ENCODE measurements at regions of chr22 and their contacts with region 1.

Region 1: DNA sequence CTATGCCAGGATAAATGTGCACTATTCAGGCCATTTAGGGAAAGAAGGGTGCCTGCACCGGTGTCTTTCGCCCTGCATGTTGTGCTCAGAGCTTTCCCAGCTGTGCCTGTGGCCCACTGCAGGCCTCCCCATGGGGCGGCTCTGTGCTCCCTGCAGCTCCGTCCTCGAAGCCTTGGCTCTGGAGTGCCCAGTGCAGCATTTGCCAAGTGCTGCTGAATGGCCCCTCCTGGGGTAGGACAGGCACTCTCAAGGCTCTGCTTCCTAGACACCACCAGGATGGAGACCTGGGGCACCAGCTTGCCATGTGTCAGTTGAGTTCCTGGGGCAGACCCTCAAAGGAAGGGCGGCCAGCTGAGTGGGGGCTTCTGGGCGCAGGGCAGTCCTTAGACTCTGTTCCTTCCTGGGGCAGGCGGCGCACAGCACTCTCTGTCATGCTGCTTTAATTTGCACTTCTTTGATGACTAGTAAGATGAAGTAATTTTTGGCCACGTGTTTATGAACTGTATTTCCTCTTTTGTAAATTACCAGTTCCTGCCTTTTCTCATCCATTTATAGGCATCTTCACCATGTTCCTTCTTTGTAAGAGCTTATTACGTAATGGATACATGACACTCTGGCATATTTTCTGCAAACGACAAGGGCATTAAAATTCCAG is 32.1 kb upstream of the GNB1L start:
- DNase-seq: peak; percentile 25 to 57
- ATAC-seq: peak in 2 of 4 donors; percentile 25 to 35
- H3K4me3 ChIP-seq: no peak overlapping the region
- H3K27ac ChIP-seq: no peak overlapping the region
- H3K4me1 ChIP-seq: peaks cover 8% of the 10 kb centered on the region
- H3K27me3 ChIP-seq: no peaks in the 10 kb centered on the region
- CTCF ChIP-seq: no peak

Region 2: DNA sequence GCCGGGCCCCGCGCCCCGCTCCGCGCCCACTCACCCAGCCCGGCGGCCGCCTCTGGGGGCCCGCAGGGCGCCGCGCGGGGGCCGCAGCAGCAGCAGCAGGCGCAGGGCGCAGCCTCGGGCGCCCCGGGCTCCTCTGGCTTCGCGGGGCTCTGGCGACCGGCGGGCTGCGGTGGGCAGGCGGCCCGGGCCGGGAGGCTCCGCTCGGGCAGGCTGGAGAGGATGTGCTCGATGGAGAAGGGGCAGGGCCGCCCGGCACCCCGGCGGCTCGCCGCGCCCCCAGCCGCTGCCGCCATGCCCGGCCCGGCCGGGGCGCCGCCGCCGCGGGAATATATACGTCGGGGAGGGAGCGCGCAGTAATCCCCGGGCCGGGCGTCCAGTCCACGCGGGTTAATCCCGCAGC is 736.7 kb before region 1 on chr22 and contains the start of gene GSC2:
- intact Hi-C with region 1: loop called in 1 of 2 experiments (anchors 5 kb)
- DNase-seq: no peak
- ATAC-seq: no peak
- H3K4me3 ChIP-seq: peak within 1 kb of the TSS; percentile 57
- H3K27ac ChIP-seq: no peak within 1 kb of the TSS
- H3K4me1 ChIP-seq: peaks cover 6% of the 10 kb centered on the region
- H3K27me3 ChIP-seq: peaks cover 0 to 64% (median 31%) of the 10 kb centered on the region in 3 donors
- CTCF ChIP-seq: no peak
- total RNA-seq, gene GSC2: not detected

Measured in psoas muscle (tissue), 8 donors.